Activated naive CD4-positive, alpha-beta T cell treated with anti-CD3 and anti-CD28 coated beads for 36 hours (primary cell): ENCODE measurements at regions of chr17 and their contacts with region 1.

Region 1: DNA sequence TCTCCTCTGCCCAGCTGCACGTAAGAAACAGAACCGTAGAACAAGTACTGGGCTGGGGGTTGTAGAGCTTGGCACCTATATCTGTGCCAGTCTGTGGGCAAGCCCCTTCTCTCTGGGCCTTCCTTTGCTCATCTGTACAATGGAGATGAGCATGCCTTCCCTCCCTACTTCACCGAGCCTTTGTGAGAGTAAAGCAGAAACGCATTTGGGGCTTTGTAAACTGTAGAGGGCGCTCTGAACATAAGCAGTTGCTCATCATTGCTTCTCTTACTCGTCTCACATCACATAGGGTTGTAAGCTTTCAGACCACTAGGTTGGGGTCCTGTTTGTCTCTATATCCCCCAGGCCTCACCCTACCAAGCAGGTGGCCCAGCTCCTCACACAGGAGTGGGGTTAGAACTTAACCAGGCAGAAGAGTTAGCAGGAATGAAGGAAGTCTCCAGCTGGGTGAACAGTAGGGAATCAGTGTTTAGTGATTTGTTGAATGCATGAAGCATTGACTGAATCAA is 15.1 kb downstream of the SAMD14 start:
- DNase-seq: peak; percentile 76
- H3K4me3 Mint-ChIP-seq: no peak overlapping the region
- H3K27ac Mint-ChIP-seq: no peak overlapping the region
- H3K4me1 Mint-ChIP-seq: peaks cover 7% of the 10 kb centered on the region
- H3K27me3 Mint-ChIP-seq: peaks cover 26% of the 10 kb centered on the region

Region 2: GRCh38 chr17:50139950-50140871 is 25.3 kb after region 1 on chr17:
- CTCF ChIA-PET with region 1: interaction called, 29 read pairs
- intact Hi-C with region 1: no loop called
- DNase-seq: peak; percentile 91
- H3K4me3 Mint-ChIP-seq: peak overlapping the region; percentile 44
- H3K27ac Mint-ChIP-seq: peak overlapping the region; percentile 78
- H3K4me1 Mint-ChIP-seq: peaks cover 49% of the 10 kb centered on the region
- H3K27me3 Mint-ChIP-seq: no peaks in the 10 kb centered on the region

Region 3: GRCh38 chr17:50161023-50161910 is 46.4 kb after region 1 on chr17:
- CTCF ChIA-PET with region 1: interaction called, 11 read pairs
- intact Hi-C with region 1: loop called (anchors 1 kb)
- DNase-seq: peak; percentile 97
- H3K4me3 Mint-ChIP-seq: peak overlapping the region; percentile 64
- H3K27ac Mint-ChIP-seq: peak overlapping the region; percentile 96
- H3K4me1 Mint-ChIP-seq: peaks cover 35% of the 10 kb centered on the region
- H3K27me3 Mint-ChIP-seq: no peaks in the 10 kb centered on the region

Region 4: GRCh38 chr17:50269477-50270434 is 154.9 kb after region 1 on chr17:
- CTCF ChIA-PET with region 1: interaction called, 4 read pairs
- intact Hi-C with region 1: loop called (anchors 5 kb)
- DNase-seq: peak; percentile 86
- H3K4me3 Mint-ChIP-seq: no peak overlapping the region
- H3K27ac Mint-ChIP-seq: no peak overlapping the region
- H3K4me1 Mint-ChIP-seq: peaks cover 13% of the 10 kb centered on the region
- H3K27me3 Mint-ChIP-seq: peaks cover 13% of the 10 kb centered on the region